Psoas muscle (tissue), 8 donors: ENCODE measurements at regions of chr5 and their contacts with region 1.

Region 1: DNA sequence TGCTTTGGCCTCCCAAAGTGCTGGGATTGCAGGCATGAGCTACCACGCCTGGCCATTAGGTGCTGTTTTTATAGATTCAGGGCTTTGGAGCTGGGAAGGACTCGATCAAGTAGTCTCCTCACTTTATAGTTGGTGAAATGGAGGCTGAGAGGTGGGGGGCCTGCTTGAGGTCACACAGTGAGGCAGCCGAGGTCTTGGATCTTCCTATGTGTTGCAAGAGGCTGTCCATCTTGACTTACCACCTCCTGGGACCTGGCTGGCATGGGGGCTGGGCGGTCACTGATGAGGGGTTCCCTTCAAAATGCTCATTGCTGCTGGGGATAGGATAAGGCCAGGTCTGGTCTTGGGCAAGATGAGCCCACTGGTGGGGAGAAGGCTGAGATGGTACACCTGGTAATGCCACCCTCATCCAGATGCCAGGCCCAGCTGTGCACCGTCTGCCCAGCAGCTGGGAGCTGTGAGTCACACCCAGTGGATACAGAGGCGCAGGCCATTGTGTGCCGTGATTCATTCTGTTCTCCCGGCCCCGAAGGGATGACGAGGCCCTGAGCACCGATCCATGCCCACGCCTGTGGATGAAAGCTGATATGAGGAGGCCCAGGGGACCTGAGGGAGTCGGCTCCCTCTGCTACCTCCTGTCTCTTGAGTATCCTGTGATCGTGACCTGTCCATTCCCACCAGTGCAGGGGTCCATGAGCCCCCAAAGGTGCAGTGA is 10.5 kb upstream of the NDST1 start:
- DNase-seq: peak; percentile 85 to 91
- ATAC-seq: peak; percentile 81 to 91 (median 90)
- H3K4me3 ChIP-seq: no peak overlapping the region
- H3K27ac ChIP-seq: peak overlapping the region; percentile 74
- H3K4me1 ChIP-seq: peaks cover 67% of the 10 kb centered on the region
- H3K27me3 ChIP-seq: no peaks in the 10 kb centered on the region
- CTCF ChIP-seq: no peak

Region 2: GRCh38 chr5:150517272-150518152 is 20.1 kb after region 1 on chr5:
- intact Hi-C with region 1: loop called in 1 of 2 experiments (anchors 1 kb)
- DNase-seq: peak; percentile 45 to 64
- ATAC-seq: peak in 3 of 4 donors; percentile 12 to 21 (median 15)
- H3K4me3 ChIP-seq: no peak overlapping the region
- H3K27ac ChIP-seq: no peak overlapping the region
- H3K4me1 ChIP-seq: peaks cover 71% of the 10 kb centered on the region
- H3K27me3 ChIP-seq: no peaks in the 10 kb centered on the region
- CTCF ChIP-seq: no peak

Region 3: DNA sequence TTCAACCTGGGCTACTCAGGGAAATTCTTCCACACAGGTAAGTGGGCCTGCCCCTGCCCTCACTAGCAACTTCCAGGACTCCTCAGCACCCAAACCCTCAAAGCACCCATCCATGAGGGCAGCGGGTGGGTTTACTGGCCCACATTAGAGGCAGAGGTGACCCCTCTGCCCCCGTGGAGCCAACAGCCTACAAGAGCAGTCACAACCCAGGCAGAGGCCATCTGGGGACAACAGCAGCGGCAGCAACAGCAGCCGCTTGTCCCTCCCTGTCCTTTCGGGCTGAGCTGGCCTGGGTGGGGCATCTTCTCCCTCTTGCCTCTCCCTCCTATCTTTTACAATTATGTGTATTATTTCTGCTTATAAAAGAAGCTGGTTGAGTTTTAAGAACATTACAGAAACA is 35.6 kb after region 1 on chr5:
- intact Hi-C with region 1: loop called (anchors 5 kb)
- DNase-seq: no peak
- ATAC-seq: no peak
- H3K4me3 ChIP-seq: no peak overlapping the region
- H3K27ac ChIP-seq: no peak overlapping the region
- H3K4me1 ChIP-seq: peaks cover 20% of the 10 kb centered on the region
- H3K27me3 ChIP-seq: no peaks in the 10 kb centered on the region
- CTCF ChIP-seq: no peak